ENCODE measurements at regions of chr17 and their contacts with region 1.

Region 1: DNA sequence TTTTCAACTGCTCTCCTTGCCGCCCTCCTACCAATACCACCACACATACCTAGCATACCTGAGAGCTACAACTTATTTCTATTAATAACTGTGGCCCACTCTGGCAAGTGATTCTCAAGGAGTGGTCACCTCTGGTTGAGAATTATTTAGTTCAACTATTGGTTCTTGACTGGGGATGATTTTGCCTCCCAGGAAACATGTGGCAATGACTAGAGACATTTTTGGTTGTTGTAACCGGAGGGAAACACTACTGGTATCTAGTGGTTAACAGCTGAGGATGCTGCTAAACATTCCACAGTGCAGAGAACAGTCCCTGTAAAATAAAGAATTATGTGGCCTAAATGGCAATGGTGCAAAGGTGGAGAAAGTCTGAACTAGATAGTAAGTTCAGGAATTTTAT is 96.7 kb downstream of the TRIM37 start:
- DNase-seq: no peak
- ATAC-seq: no peak
- H3K4me3 ChIP-seq: no peak overlapping the region
- H3K27ac ChIP-seq: no peak overlapping the region
- H3K4me1 ChIP-seq: no peaks in the 10 kb centered on the region
- H3K27me3 ChIP-seq: no peaks in the 10 kb centered on the region
- CTCF ChIP-seq: no peak
- POLR2A ChIP-seq: no peak

Region 2: GRCh38 chr17:58710936-58711775 is 298.9 kb before region 1 on chr17:
- in situ Hi-C with region 1: loop called in 3 of 4 experiments (anchors 5 to 25 kb)
- intact Hi-C with region 1: loop called (anchors 2 kb)
- DNase-seq: no peak
- ATAC-seq: no peak
- H3K4me3 ChIP-seq: no peak overlapping the region
- H3K27ac ChIP-seq: no peak overlapping the region
- H3K4me1 ChIP-seq: no peaks in the 10 kb centered on the region
- H3K27me3 ChIP-seq: no peaks in the 10 kb centered on the region
- CTCF ChIP-seq: peak; percentile 24 to 61 (median 41)
- POLR2A ChIP-seq: no peak

Region 3: DNA sequence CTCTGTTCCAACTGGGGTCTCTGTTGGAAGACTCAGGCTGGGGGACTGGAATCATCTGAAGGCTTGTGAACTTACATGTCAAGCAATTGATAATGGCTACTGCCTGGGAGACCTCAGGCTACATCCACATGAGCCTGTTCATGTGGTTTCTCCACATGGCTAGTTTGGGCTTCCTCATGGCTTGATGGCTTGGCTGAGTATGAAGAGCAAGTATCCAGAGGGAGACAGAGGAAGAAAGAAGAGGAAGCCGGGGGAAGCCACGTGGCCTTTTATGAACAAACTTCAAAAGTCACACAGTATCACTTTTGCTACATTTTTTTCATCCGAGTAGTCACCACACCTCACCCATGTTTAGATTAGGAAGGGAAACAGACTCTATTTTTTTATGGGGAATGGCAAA is 62.2 kb before region 1 on chr17:
- in situ Hi-C with region 1: no loop called
- intact Hi-C with region 1: no loop called
- DNase-seq: no peak
- ATAC-seq: no peak
- H3K4me3 ChIP-seq: no peak overlapping the region
- H3K27ac ChIP-seq: no peak overlapping the region
- H3K4me1 ChIP-seq: no peaks in the 10 kb centered on the region
- H3K27me3 ChIP-seq: no peaks in the 10 kb centered on the region
- CTCF ChIP-seq: no peak
- POLR2A ChIP-seq: no peak

Region 4: DNA sequence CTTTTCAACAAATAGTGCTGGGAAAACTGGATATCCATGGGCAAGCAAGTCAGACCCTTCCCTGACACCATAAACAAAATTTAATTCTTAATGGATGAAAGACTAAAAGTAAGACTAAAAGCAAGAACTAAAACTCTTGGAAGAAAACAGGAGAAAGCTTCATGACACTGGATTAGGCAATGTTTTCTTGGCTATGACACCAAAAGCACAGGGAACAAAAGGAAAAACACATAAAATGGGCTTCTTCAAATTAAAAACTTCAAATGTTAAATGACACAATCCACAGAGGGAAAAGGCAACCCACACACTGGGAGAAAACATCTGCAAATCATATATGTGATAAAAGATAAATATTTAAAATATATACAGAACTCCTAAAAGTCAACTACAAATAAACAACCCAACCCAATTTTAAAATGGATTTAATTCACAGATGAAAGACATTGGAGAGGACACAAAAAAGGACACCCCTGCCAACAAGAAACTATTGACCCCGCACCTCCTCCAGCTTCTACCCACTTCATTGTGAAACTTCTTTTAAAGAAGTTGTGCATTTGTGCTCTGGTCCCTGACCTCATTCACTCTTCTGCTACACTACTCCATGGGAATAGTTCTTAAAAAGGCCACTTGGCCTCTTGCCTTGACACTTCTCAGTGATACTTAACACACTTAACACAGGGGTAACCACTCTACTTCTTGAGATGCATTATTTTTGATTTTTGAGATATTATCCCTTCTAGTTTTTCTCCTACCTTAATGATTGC is 16.3 kb after region 1 on chr17:
- in situ Hi-C with region 1: no loop called
- intact Hi-C with region 1: no loop called
- DNase-seq: no peak
- ATAC-seq: peak in 1 of 2 donors; percentile 35
- H3K4me3 ChIP-seq: no peak overlapping the region
- H3K27ac ChIP-seq: peak overlapping the region; percentile 49 to 74 (median 67)
- H3K4me1 ChIP-seq: peaks cover 18 to 23% of the 10 kb centered on the region in 2 donors
- H3K27me3 ChIP-seq: no peaks in the 10 kb centered on the region
- CTCF ChIP-seq: no peak
- POLR2A ChIP-seq: no peak

Measured in gastrocnemius medialis (tissue), 4 donors.